Activated naive CD4-positive, alpha-beta T cell treated with anti-CD3 and anti-CD28 coated beads for 36 hours (primary cell): ENCODE measurements at regions of chr7 and their contacts with region 1.

Region 1: GRCh38 chr7:151351027-151351426 is 9.4 kb downstream of the NUB1 start:
- DNase-seq: peak; percentile 70
- H3K4me3 Mint-ChIP-seq: peak overlapping the region; percentile 17
- H3K27ac Mint-ChIP-seq: peak overlapping the region; percentile 91
- H3K4me1 Mint-ChIP-seq: peaks cover 51% of the 10 kb centered on the region
- H3K27me3 Mint-ChIP-seq: no peaks in the 10 kb centered on the region

Region 2: GRCh38 chr7:151017953-151018420 is 333.0 kb before region 1 on chr7:
- CTCF ChIA-PET with region 1: no interaction called
- intact Hi-C with region 1: loop called (anchors 5 kb)
- DNase-seq: peak; percentile 82
- H3K4me3 Mint-ChIP-seq: peak overlapping the region; percentile 72
- H3K27ac Mint-ChIP-seq: no peak overlapping the region
- H3K4me1 Mint-ChIP-seq: peaks cover 50% of the 10 kb centered on the region
- H3K27me3 Mint-ChIP-seq: peaks cover 7% of the 10 kb centered on the region

Region 3: DNA sequence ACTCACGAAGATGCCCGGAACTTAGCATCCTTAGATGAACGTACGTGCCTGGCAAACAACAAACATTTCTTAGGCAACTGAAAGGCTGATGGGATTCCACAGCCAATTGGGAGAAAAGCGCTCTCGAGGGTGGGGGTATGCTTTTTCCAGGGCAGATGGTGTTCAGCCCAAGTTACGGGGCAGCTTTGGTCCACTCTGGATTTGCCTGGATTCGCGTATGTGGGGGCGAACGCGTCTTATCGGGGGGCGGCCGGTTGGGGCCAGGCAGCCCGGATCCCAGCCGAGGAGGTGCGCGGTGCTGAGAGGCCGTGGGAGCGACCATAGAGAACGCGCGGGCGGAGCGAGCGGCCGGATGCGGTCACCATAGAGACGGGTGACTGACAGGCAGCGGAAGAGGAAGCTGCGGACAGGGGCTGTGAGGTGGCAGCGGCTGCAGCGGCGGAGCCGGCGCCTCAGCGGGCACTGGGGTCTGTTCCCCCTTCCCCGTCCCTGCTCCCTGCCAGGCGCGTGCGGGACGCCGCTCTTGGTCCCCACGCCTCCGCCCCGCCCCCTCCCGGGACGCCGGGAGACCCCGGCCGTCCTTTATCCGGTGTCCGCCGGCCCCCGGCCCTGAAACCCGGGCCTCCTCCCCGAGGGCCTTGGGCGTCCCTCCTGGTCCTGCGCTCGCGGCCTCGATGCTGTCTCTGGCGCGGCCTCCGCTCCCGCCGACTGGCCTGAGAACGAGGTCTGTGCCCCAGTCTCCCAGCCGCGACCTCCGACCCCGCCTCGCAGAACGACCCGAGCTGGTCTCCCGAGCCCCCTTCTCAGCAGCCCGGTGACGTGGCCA is 118.7 kb before region 1 on chr7 and contains the start of gene CHPF2:
- CTCF ChIA-PET with region 1: no interaction called
- intact Hi-C with region 1: loop called (anchors 1 kb)
- DNase-seq: peak; percentile 94
- H3K4me3 Mint-ChIP-seq: peak within 1 kb of the TSS; percentile 100
- H3K27ac Mint-ChIP-seq: peak within 1 kb of the TSS; percentile 99
- H3K4me1 Mint-ChIP-seq: peaks cover 35% of the 10 kb centered on the region
- H3K27me3 Mint-ChIP-seq: no peaks in the 10 kb centered on the region
- total RNA-seq, gene CHPF2: 21.0 TPM

Region 4: DNA sequence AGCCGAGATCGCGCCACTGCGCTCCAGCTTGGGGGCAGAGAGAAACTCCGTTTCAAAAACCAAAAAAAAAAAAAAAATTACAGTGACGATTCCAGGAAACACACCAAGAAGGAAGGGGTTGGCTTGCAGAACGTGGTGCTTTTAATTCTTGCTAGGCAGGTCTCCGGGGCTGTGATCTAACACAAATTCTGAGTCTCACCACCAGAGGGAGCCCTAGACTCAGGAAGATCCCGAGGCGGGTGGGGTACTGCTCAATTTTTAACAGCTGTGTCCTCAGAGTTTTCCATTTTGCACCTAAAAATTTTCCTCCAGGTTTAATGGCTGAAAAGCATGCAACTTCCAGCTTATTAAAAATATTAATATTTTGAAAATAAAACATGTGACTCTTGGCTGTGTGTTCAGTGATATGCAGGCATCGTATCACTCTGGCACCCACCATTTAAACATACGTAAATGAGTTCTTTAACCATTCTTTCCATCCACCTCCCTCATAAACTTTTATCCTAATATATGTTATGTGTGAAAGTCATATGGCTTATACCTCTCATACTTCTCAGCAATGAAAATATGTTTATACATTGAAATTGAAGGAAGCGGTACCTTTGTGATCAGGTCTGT is 35.9 kb before region 1 on chr7:
- CTCF ChIA-PET with region 1: interaction called, 208 read pairs
- intact Hi-C with region 1: loop called (anchors 1 kb)
- DNase-seq: peak; percentile 87
- H3K4me3 Mint-ChIP-seq: peak overlapping the region; percentile 44
- H3K27ac Mint-ChIP-seq: no peak overlapping the region
- H3K4me1 Mint-ChIP-seq: peaks cover 9% of the 10 kb centered on the region
- H3K27me3 Mint-ChIP-seq: no peaks in the 10 kb centered on the region

Region 5: GRCh38 chr7:151448261-151449252 is 97.5 kb after region 1 on chr7:
- CTCF ChIA-PET with region 1: interaction called, 38 read pairs
- intact Hi-C with region 1: loop called (anchors 1 kb)
- DNase-seq: peak; percentile 85
- H3K4me3 Mint-ChIP-seq: peak overlapping the region; percentile 65
- H3K27ac Mint-ChIP-seq: no peak overlapping the region
- H3K4me1 Mint-ChIP-seq: peaks cover 14% of the 10 kb centered on the region
- H3K27me3 Mint-ChIP-seq: no peaks in the 10 kb centered on the region

Region 6: GRCh38 chr7:151876899-151877777 is 526.1 kb after region 1 on chr7 and contains the start of gene PRKAG2:
- CTCF ChIA-PET with region 1: no interaction called
- intact Hi-C with region 1: loop called (anchors 5 kb)
- DNase-seq: peak; percentile 63
- H3K4me3 Mint-ChIP-seq: peak within 1 kb of the TSS; percentile 96
- H3K27ac Mint-ChIP-seq: peak within 1 kb of the TSS; percentile 81
- H3K4me1 Mint-ChIP-seq: peaks cover 10% of the 10 kb centered on the region
- H3K27me3 Mint-ChIP-seq: no peaks in the 10 kb centered on the region
- total RNA-seq, gene PRKAG2: 16.9 to 18.7 TPM